Calu3 (cell line): ENCODE measurements at regions of chr4 and their contacts with region 1.

Region 1: GRCh38 chr4:113094802-113095201 is 45.3 kb downstream of the ANK2 start:
- DNase-seq: no peak
- H3K4me3 Mint-ChIP-seq: no peak overlapping the region
- H3K27ac Mint-ChIP-seq: no peak overlapping the region
- H3K4me1 Mint-ChIP-seq: no peaks in the 10 kb centered on the region
- H3K27me3 Mint-ChIP-seq: no peaks in the 10 kb centered on the region
- CTCF ChIP-seq: peak; percentile 56

Region 2: DNA sequence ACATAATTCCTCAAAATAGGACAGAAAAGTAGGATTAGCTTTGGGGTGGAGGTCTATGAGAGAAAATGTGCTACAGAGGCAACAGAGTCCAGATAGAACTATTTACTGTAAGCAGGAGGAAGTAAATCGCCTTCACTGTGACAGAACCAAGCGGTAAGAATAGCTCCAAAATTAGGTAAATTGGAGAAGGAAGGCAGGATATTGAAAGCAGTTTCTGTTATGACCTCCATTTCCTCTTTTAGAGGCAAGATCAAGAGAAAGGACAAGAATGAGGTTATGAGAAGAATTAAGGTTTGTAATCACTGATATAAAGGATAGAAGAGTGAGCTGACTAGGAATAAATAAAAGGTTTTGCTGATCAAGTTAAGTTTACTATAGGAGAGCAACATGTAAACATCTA is 534.7 kb before region 1 on chr4:
- CTCF ChIA-PET with region 1: no interaction called
- intact Hi-C with region 1: no loop called
- DNase-seq: no peak
- H3K4me3 Mint-ChIP-seq: no peak overlapping the region
- H3K27ac Mint-ChIP-seq: no peak overlapping the region
- H3K4me1 Mint-ChIP-seq: no peaks in the 10 kb centered on the region
- H3K27me3 Mint-ChIP-seq: no peaks in the 10 kb centered on the region
- CTCF ChIP-seq: no peak

Region 3: DNA sequence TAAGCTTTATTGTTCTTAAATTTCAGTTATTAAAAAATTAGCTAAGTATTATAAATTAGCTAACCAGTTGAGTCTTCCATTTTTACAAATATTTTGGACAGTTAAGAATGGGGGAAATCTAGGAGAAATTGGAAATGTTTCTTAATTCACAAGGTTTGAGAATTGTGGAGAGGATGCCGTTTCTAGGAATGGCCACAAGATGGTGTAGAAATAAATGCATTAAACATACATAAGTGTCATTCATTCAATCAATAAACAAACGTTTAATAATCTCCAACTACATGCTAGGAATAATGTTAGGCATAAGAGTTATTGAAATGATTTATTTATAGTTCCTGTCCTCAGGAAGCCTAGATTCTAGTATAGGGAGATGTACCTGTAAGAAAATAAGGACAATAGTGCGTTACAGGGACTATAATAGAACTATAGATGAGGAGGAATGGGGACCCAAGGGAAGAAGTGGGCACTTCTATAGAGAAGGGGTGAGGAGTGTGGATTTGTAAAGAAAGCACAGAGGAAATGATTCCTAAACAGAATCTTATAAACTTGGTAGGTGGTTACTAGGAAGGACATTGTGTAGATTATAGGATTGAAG is 241.0 kb before region 1 on chr4:
- CTCF ChIA-PET with region 1: no interaction called
- intact Hi-C with region 1: loop called (anchors 1 kb)
- DNase-seq: no peak
- H3K4me3 Mint-ChIP-seq: no peak overlapping the region
- H3K27ac Mint-ChIP-seq: no peak overlapping the region
- H3K4me1 Mint-ChIP-seq: peaks cover 10% of the 10 kb centered on the region
- H3K27me3 Mint-ChIP-seq: no peaks in the 10 kb centered on the region
- CTCF ChIP-seq: peak; percentile 29

Region 4: GRCh38 chr4:112946127-112946526 is 148.7 kb before region 1 on chr4:
- CTCF ChIA-PET with region 1: no interaction called
- intact Hi-C with region 1: loop called (anchors 2 kb)
- DNase-seq: no peak
- H3K4me3 Mint-ChIP-seq: no peak overlapping the region
- H3K27ac Mint-ChIP-seq: no peak overlapping the region
- H3K4me1 Mint-ChIP-seq: no peaks in the 10 kb centered on the region
- H3K27me3 Mint-ChIP-seq: no peaks in the 10 kb centered on the region
- CTCF ChIP-seq: no peak